ENCODE measurements at regions of chr12 and their contacts with region 1.

Region 1: GRCh38 chr12:8949342-8950220 is at the start of gene M6PR:
- DNase-seq: peak; percentile 94
- H3K4me3 Mint-ChIP-seq: peak within 1 kb of the TSS; percentile 99
- H3K27ac Mint-ChIP-seq: peak within 1 kb of the TSS; percentile 87
- H3K4me1 Mint-ChIP-seq: peaks cover 65% of the 10 kb centered on the region
- H3K27me3 Mint-ChIP-seq: no peaks in the 10 kb centered on the region
- total RNA-seq, gene M6PR: 210 to 211 TPM

Region 2: GRCh38 chr12:8817856-8818255 is 131.7 kb before region 1 on chr12:
- CTCF ChIA-PET with region 1: no interaction called
- POLR2A ChIA-PET with region 1: no interaction called
- DNase-seq: no peak
- H3K4me3 Mint-ChIP-seq: no peak overlapping the region
- H3K27ac Mint-ChIP-seq: no peak overlapping the region
- H3K4me1 Mint-ChIP-seq: no peaks in the 10 kb centered on the region
- H3K27me3 Mint-ChIP-seq: no peaks in the 10 kb centered on the region

Region 3: DNA sequence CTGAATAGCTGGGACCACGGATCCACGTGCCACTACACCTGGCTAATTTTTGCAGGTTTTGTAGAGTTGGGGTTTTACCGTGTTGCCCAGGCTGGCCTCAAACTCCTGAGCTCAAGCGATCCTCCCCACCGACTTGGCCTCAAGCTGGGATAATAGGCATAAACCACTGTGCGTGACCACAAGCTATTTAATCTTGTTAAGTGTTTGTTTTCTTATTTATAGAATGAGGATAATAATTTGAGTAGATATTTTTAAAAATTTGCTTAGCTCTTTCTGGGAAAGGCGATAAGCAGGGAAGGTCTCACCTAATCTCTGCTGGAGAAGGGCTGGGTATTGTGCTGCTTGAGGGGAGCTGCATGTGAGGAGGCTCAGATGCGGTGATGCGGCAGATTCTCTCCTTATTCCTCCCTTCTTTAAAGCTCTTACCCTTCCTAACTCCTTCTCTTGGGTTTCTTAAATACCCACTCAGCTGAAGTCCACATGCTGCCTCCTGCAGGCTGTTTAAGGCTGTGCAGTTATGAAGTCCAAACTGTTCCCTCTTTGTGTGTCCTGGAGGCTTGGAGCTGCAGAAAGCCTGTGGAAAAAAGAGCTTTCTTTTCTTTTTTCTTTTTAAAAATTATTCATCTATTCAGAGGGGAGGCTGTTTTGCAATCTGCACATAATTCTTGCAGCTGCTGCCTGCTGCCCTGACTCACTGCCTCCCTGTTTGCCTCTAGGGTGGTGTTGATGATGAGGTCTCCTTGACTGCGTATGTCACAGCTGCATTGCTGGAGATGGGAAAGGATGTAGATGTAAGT is 89.2 kb before region 1 on chr12:
- CTCF ChIA-PET with region 1: no interaction called
- POLR2A ChIA-PET with region 1: no interaction called
- DNase-seq: peak; percentile 24
- H3K4me3 Mint-ChIP-seq: no peak overlapping the region
- H3K27ac Mint-ChIP-seq: no peak overlapping the region
- H3K4me1 Mint-ChIP-seq: no peaks in the 10 kb centered on the region
- H3K27me3 Mint-ChIP-seq: peaks cover 4% of the 10 kb centered on the region

Region 4: GRCh38 chr12:8890313-8891085 is 59.1 kb before region 1 on chr12:
- CTCF ChIA-PET with region 1: interaction called, 10 read pairs
- POLR2A ChIA-PET with region 1: no interaction called
- DNase-seq: peak; percentile 59
- H3K4me3 Mint-ChIP-seq: peak overlapping the region; percentile 71
- H3K27ac Mint-ChIP-seq: no peak overlapping the region
- H3K4me1 Mint-ChIP-seq: peaks cover 3% of the 10 kb centered on the region
- H3K27me3 Mint-ChIP-seq: peaks cover 2% of the 10 kb centered on the region

Region 5: GRCh38 chr12:8914716-8915526 is 34.7 kb before region 1 on chr12:
- CTCF ChIA-PET with region 1: interaction called, 28 read pairs
- POLR2A ChIA-PET with region 1: interaction called, 21 read pairs
- DNase-seq: peak; percentile 63
- H3K4me3 Mint-ChIP-seq: no peak overlapping the region
- H3K27ac Mint-ChIP-seq: no peak overlapping the region
- H3K4me1 Mint-ChIP-seq: peaks cover 10% of the 10 kb centered on the region
- H3K27me3 Mint-ChIP-seq: peaks cover 9% of the 10 kb centered on the region

Region 6: DNA sequence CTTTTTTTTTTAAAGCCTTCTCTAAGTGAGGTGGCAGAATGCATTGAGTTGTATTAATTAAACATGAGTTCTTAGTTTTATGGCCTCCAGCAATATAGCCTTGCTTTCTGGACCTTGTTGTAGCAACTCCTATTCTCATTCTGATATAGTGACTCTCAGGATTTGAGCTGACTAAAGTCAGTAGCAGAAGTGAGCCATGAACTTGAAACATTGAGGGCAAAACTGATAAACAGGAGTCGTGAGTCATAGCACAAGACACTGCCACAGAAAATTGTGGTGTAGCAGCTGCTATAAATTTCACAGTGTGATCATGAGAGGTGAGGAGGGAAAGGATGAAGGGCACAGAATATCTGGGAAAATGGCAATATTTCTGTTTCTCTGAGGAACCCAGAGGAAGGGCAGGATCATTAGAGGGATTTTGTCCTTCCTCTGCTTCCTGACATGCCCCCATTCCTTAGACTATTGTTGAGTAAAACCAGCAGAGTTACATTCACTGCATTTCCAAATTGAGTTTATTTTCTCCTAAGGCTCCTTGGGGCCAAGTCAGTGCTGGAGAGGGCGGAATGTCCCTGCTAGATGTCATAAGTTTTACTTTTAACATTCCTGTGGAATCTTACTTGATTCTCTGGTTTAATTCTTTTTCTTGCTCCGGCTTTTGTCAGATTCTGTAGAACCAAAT is 47.2 kb after region 1 on chr12:
- CTCF ChIA-PET with region 1: interaction called, 7 read pairs
- POLR2A ChIA-PET with region 1: interaction called, 13 read pairs
- DNase-seq: peak; percentile 36
- H3K4me3 Mint-ChIP-seq: no peak overlapping the region
- H3K27ac Mint-ChIP-seq: peak overlapping the region; percentile 4
- H3K4me1 Mint-ChIP-seq: peaks cover 51% of the 10 kb centered on the region
- H3K27me3 Mint-ChIP-seq: peaks cover 2% of the 10 kb centered on the region

Region 7: GRCh38 chr12:9027161-9028059 is 77.8 kb after region 1 on chr12:
- CTCF ChIA-PET with region 1: interaction called, 44 read pairs
- POLR2A ChIA-PET with region 1: interaction called, 70 read pairs
- DNase-seq: peak; percentile 55
- H3K4me3 Mint-ChIP-seq: peak overlapping the region; percentile 57
- H3K27ac Mint-ChIP-seq: peak overlapping the region; percentile 77
- H3K4me1 Mint-ChIP-seq: peaks cover 24% of the 10 kb centered on the region
- H3K27me3 Mint-ChIP-seq: peaks cover 3% of the 10 kb centered on the region

Region 8: DNA sequence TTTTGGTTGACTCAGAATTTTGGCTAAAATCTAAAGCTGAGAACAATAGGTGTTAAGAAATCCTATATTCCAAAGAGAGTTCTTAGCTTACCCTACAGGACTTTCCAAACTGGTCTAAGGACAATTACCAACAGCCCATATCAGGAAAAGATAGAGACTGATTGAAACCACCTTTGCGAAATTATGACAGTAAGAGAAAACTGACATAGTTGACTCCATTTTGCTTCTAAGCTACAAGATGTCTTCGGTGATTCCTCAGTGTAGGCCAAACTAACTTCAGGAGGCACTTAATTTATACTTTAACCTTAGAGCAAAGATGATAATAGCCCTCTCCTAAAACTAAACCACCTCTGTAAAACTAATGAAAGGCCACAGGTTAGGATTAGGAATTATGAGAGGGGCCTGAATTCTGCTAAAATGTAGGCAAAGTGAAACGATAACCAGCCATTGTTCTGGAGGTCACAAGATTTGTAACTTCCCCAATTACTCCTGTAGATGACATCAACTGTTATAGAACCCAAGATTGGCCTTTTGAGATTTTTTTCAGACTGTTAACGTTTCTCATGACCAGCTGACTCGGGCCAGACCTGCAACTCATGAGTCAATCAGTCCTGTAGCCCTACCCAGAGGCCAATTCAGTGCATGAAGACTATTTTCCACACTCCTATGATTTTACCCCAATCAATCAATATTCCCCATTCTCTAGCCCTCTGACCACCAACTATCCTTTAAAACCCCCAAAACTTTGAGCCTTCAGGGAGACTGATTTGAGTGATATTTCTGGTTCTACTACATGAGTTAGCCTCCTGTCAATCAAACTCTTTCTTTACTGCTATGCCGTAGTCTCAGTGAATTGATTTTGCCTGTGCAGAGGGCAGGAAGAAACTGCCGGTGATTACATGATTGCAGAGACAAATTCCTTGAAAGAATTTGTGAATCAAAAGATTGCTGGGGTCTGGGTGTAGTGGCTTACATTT is 82.9 kb after region 1 on chr12:
- CTCF ChIA-PET with region 1: interaction called, 162 read pairs
- POLR2A ChIA-PET with region 1: interaction called, 70 read pairs
- DNase-seq: no peak
- H3K4me3 Mint-ChIP-seq: no peak overlapping the region
- H3K27ac Mint-ChIP-seq: no peak overlapping the region
- H3K4me1 Mint-ChIP-seq: peaks cover 19% of the 10 kb centered on the region
- H3K27me3 Mint-ChIP-seq: peaks cover 3% of the 10 kb centered on the region

Region 9: GRCh38 chr12:9039397-9039977 is 89.9 kb after region 1 on chr12:
- CTCF ChIA-PET with region 1: interaction called, 162 read pairs
- POLR2A ChIA-PET with region 1: interaction called, 26 read pairs
- DNase-seq: no peak
- H3K4me3 Mint-ChIP-seq: no peak overlapping the region
- H3K27ac Mint-ChIP-seq: no peak overlapping the region
- H3K4me1 Mint-ChIP-seq: peaks cover 26% of the 10 kb centered on the region
- H3K27me3 Mint-ChIP-seq: no peaks in the 10 kb centered on the region

Measured in activated CD4-positive, alpha-beta memory T cell treated with anti-CD3 and anti-CD28 coated beads, Interleukin-2, amount 10 ng/mL, durations not matched to agents 7 days and 5 days (primary cell).